Activated naive CD4-positive, alpha-beta T cell treated with anti-CD3 and anti-CD28 coated beads for 36 hours (primary cell): ENCODE measurements at regions of chr9 and their contacts with region 1.

Region 1: GRCh38 chr9:6049798-6050197 is 34.4 kb upstream of the RANBP6 start:
- DNase-seq: peak; percentile 77
- H3K4me3 Mint-ChIP-seq: no peak overlapping the region
- H3K27ac Mint-ChIP-seq: no peak overlapping the region
- H3K4me1 Mint-ChIP-seq: peaks cover 11% of the 10 kb centered on the region
- H3K27me3 Mint-ChIP-seq: peaks cover 3% of the 10 kb centered on the region

Region 2: GRCh38 chr9:4422495-4422894 is 1627.3 kb before region 1 on chr9:
- CTCF ChIA-PET with region 1: no interaction called
- intact Hi-C with region 1: no loop called
- DNase-seq: peak; percentile 36
- H3K4me3 Mint-ChIP-seq: no peak overlapping the region
- H3K27ac Mint-ChIP-seq: no peak overlapping the region
- H3K4me1 Mint-ChIP-seq: peaks cover 12% of the 10 kb centered on the region
- H3K27me3 Mint-ChIP-seq: no peaks in the 10 kb centered on the region

Region 3: GRCh38 chr9:5920860-5921328 is 128.9 kb before region 1 on chr9:
- CTCF ChIA-PET with region 1: no interaction called
- intact Hi-C with region 1: no loop called
- DNase-seq: peak; percentile 48
- H3K4me3 Mint-ChIP-seq: no peak overlapping the region
- H3K27ac Mint-ChIP-seq: peak overlapping the region; percentile 81
- H3K4me1 Mint-ChIP-seq: peaks cover 28% of the 10 kb centered on the region
- H3K27me3 Mint-ChIP-seq: no peaks in the 10 kb centered on the region

Region 4: GRCh38 chr9:6068983-6069382 is 19.2 kb after region 1 on chr9:
- CTCF ChIA-PET with region 1: interaction called, 28 read pairs
- intact Hi-C with region 1: loop called (anchors 2 kb)
- DNase-seq: peak; percentile 38
- H3K4me3 Mint-ChIP-seq: peak overlapping the region; percentile 39
- H3K27ac Mint-ChIP-seq: peak overlapping the region; percentile 81
- H3K4me1 Mint-ChIP-seq: peaks cover 18% of the 10 kb centered on the region
- H3K27me3 Mint-ChIP-seq: no peaks in the 10 kb centered on the region

Region 5: DNA sequence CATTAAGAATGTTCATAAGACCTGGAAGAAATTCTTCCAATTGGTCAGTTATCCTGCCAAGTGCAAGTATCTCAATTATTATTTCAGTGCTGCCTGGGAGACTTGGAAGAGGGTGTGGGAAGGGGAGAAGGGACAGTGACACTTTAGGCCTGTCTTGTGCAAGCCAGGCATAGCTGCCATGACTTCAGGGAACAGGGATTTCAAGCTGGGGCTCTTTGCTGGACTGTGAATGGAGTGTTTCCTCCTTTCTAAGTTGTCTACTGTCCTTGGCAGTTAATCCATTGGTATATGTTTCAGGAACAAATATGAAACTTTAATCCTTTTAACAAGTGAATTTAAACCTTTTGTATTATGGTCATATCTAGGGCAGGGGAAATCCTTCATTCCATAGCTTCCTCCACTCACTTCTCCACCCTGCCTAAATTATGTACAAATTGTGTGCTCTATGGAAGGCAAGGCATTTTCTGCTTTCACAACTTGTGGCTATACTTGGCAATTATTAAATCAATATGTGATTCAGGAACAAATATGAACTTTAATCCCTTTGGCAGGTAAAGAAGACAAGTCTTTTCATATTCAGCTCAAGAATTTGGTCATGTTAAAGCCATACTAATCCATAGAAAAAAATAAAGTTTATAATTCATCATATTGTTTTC is 93.1 kb after region 1 on chr9:
- CTCF ChIA-PET with region 1: no interaction called
- intact Hi-C with region 1: no loop called
- DNase-seq: no peak
- H3K4me3 Mint-ChIP-seq: no peak overlapping the region
- H3K27ac Mint-ChIP-seq: no peak overlapping the region
- H3K4me1 Mint-ChIP-seq: no peaks in the 10 kb centered on the region
- H3K27me3 Mint-ChIP-seq: peaks cover 3% of the 10 kb centered on the region